ENCODE measurements at regions of chr14 and their contacts with region 1.

Region 1: DNA sequence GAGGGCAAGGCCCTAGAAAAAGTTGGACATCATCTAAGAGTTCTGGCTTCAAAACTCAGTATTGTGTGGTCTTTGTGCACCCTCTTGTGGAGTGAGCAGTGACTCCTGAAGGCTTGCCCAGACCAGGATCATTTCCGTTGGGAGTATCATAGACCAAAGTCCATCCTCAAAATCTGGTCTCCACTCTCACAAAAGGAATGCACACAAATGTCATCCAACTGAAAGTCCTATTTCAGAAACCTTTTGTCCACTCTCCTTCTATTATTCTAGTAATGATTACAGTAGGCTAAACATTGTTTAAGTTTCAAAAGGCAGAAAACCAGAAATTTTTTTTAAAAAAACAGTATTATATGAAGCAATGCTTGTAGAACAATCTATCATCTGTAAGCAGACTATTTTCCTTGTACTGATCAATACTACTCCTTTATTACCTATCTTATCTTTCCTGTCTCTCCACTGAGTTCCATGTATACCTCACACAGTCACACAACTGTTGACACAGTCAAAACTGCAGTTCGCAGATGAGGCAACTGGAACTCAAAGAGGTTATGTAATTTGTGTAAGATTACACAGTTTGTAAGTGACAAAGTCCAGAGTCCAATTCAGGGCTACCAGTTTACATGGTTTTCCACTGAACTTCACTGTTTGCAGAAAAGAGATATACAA is 41.4 kb downstream of the COX16 start:
- DNase-seq: peak; percentile 59
- H3K4me3 Mint-ChIP-seq: no peak overlapping the region
- H3K27ac Mint-ChIP-seq: no peak overlapping the region
- H3K4me1 Mint-ChIP-seq: peaks cover 9% of the 10 kb centered on the region
- H3K27me3 Mint-ChIP-seq: no peaks in the 10 kb centered on the region
- CTCF ChIP-seq: peak; percentile 52

Region 2: GRCh38 chr14:69726761-69727511 is 591.2 kb before region 1 on chr14:
- CTCF ChIA-PET with region 1: no interaction called
- intact Hi-C with region 1: loop called (anchors 5 kb)
- DNase-seq: peak; percentile 83
- H3K4me3 Mint-ChIP-seq: peak overlapping the region; percentile 65
- H3K27ac Mint-ChIP-seq: no peak overlapping the region
- H3K4me1 Mint-ChIP-seq: peaks cover 14% of the 10 kb centered on the region
- H3K27me3 Mint-ChIP-seq: peaks cover 15% of the 10 kb centered on the region
- CTCF ChIP-seq: peak; percentile 94

Region 3: GRCh38 chr14:69818757-69819191 is 499.3 kb before region 1 on chr14:
- CTCF ChIA-PET with region 1: no interaction called
- intact Hi-C with region 1: loop called (anchors 2 kb)
- DNase-seq: peak; percentile 78
- H3K4me3 Mint-ChIP-seq: no peak overlapping the region
- H3K27ac Mint-ChIP-seq: no peak overlapping the region
- H3K4me1 Mint-ChIP-seq: peaks cover 10% of the 10 kb centered on the region
- H3K27me3 Mint-ChIP-seq: no peaks in the 10 kb centered on the region
- CTCF ChIP-seq: peak; percentile 80

Region 4: GRCh38 chr14:70045844-70046535 is 272.1 kb before region 1 on chr14:
- CTCF ChIA-PET with region 1: no interaction called
- intact Hi-C with region 1: loop called (anchors 2 kb)
- DNase-seq: peak; percentile 90
- H3K4me3 Mint-ChIP-seq: no peak overlapping the region
- H3K27ac Mint-ChIP-seq: peak overlapping the region; percentile 9
- H3K4me1 Mint-ChIP-seq: peaks cover 41% of the 10 kb centered on the region
- H3K27me3 Mint-ChIP-seq: peaks cover 16% of the 10 kb centered on the region
- CTCF ChIP-seq: peak; percentile 76

Region 5: GRCh38 chr14:70086685-70087379 is 231.3 kb before region 1 on chr14:
- CTCF ChIA-PET with region 1: interaction called, 5 read pairs
- intact Hi-C with region 1: loop called (anchors 2 kb)
- DNase-seq: peak; percentile 41
- H3K4me3 Mint-ChIP-seq: no peak overlapping the region
- H3K27ac Mint-ChIP-seq: no peak overlapping the region
- H3K4me1 Mint-ChIP-seq: no peaks in the 10 kb centered on the region
- H3K27me3 Mint-ChIP-seq: peaks cover 37% of the 10 kb centered on the region
- CTCF ChIP-seq: no peak